CD8-positive, alpha-beta T cell (primary cell): ENCODE measurements at regions of chr4 and their contacts with region 1.

Region 1: GRCh38 chr4:101347557-101348366 is 436 bp upstream of the PPP3CA start:
- DNase-seq: peak; percentile 98 to 100 (median 99)
- ATAC-seq: peak; percentile 85
- H3K4me3 ChIP-seq: peak overlapping the region; percentile 96 to 99
- H3K4me3 Mint-ChIP-seq: peak overlapping the region; percentile 98
- H3K27ac ChIP-seq: peak overlapping the region; percentile 71 to 82
- H3K27ac Mint-ChIP-seq: peak overlapping the region; percentile 94
- H3K4me1 ChIP-seq: peaks cover 10% of the 10 kb centered on the region
- H3K4me1 Mint-ChIP-seq: peaks cover 33% of the 10 kb centered on the region
- H3K27me3 ChIP-seq: peaks cover 0 to 3% of the 10 kb centered on the region in 2 experiments
- H3K27me3 Mint-ChIP-seq: peaks cover 15% of the 10 kb centered on the region
- CTCF ChIP-seq: no peak

Region 2: DNA sequence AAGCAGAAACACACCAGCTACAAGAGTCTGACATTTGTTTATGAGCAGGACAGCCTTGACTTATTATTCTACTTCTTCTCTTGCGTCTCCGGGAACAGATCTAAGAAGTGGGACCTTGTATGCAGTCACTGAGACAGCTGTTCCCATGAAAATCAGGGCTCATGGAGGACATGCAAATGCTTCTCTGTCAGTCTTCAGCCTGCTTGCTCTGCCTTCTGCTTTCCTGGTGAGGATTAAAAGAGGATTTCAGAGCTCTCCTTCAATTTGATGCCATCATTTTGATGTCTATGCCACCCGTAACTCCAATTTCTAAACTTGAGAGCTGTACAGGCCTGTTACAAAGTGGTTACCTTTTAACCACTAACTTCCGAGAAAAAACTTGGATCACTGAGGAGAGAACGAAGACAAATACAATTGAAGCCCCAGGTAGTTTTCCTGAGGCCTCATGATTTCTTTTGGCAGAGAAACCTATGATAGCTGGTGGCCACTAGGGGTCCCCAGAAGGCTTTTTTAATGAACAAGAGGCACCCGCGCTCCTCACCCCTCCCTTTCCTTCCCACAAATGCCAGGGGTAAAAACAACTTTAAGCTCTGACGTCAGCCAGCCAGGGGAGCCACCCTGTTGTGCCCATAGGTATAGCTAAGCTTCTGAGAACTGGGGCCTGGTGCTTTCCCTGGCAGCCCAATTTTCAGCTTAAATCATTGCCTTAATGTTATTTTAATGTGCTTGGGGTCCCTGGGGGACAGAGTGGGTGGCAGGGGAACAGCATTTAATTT is 1254.5 kb before region 1 on chr4:
- CTCF ChIA-PET with region 1: no interaction called
- POLR2A ChIA-PET with region 1: no interaction called
- intact Hi-C with region 1: loop called (anchors 5 kb)
- DNase-seq: peak; percentile 68 to 97 (median 86)
- ATAC-seq: peak; percentile 99
- H3K4me3 ChIP-seq: no peak overlapping the region
- H3K4me3 Mint-ChIP-seq: no peak overlapping the region
- H3K27ac ChIP-seq: peak overlapping the region in 1 of 2 experiments; percentile 59
- H3K27ac Mint-ChIP-seq: peak overlapping the region; percentile 91
- H3K4me1 ChIP-seq: peaks cover 7% of the 10 kb centered on the region
- H3K4me1 Mint-ChIP-seq: peaks cover 18% of the 10 kb centered on the region
- H3K27me3 ChIP-seq: no peaks in the 10 kb centered on the region
- H3K27me3 Mint-ChIP-seq: no peaks in the 10 kb centered on the region
- CTCF ChIP-seq: peak; percentile 71

Region 3: DNA sequence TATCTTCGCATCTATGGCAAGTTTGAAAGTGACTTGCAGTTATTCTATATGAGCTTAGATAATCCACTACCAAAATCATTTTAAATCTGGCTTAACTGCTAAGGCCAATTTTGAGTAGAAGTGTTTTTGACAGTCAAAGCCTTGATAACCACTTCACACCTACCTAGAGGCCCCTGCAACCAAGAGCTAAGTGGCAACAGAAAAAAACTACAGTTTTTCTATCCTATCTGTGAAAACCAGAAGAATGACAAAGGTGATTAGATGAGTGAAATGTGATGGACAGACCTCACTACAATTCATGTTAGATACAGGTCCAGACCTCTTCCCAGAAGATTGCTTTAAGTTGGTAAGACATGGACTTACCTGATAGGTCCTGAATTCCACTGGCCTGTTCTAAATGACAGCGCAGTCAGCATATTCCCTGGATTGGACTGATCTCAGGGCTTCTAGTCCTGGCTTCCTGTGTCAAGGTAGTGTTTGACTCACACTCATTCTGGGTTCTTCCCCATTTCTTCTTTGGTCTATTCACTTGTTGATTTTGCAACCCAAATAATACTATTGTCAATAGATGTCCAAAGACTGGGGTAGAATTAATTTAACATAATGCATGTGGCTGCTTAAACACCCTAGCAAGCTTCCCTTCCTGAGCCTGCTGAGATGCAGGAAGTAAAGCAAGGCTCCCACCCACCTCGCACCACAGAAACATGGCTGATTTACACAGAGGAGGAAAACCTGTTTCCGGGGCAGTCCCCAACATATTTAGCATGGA is 65.5 kb before region 1 on chr4:
- CTCF ChIA-PET with region 1: no interaction called
- POLR2A ChIA-PET with region 1: no interaction called
- intact Hi-C with region 1: loop called (anchors 5 kb)
- DNase-seq: peak in 4 of 9 experiments; percentile 9 to 61 (median 33)
- ATAC-seq: peak; percentile 42
- H3K4me3 ChIP-seq: no peak overlapping the region
- H3K4me3 Mint-ChIP-seq: no peak overlapping the region
- H3K27ac ChIP-seq: peak overlapping the region in 1 of 2 experiments; percentile 7
- H3K27ac Mint-ChIP-seq: no peak overlapping the region
- H3K4me1 ChIP-seq: peaks cover 16% of the 10 kb centered on the region
- H3K4me1 Mint-ChIP-seq: peaks cover 57% of the 10 kb centered on the region
- H3K27me3 ChIP-seq: no peaks in the 10 kb centered on the region
- H3K27me3 Mint-ChIP-seq: no peaks in the 10 kb centered on the region
- CTCF ChIP-seq: no peak

Region 4: DNA sequence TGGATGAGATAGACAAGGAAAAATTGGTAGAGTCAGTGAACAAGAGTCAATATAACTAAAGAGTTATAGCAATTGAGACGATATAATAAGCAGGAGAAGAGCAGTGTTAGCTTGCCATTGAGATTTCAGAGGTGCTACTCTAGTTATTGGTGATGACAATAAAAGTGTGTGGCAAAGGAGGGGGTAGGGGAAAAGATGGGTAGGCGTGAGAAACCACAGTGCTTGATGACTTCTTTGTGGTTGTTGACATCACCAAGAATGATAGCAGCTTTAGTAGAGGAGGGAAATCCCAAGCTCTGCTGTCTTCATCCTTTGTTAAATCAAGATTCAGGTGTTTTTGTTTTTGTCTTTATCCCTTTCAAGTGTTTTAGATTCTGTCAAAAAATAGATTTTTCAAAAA is 179.4 kb after region 1 on chr4:
- CTCF ChIA-PET with region 1: interaction called, 3 read pairs
- POLR2A ChIA-PET with region 1: no interaction called
- intact Hi-C with region 1: loop called (anchors 5 to 10 kb)
- DNase-seq: peak in 8 of 9 experiments; percentile 19 to 93 (median 54)
- ATAC-seq: peak; percentile 93
- H3K4me3 ChIP-seq: no peak overlapping the region
- H3K4me3 Mint-ChIP-seq: no peak overlapping the region
- H3K27ac ChIP-seq: no peak overlapping the region
- H3K27ac Mint-ChIP-seq: peak overlapping the region; percentile 28
- H3K4me1 ChIP-seq: peaks cover 16% of the 10 kb centered on the region
- H3K4me1 Mint-ChIP-seq: peaks cover 16% of the 10 kb centered on the region
- H3K27me3 ChIP-seq: peaks cover 0 to 7% of the 10 kb centered on the region in 2 experiments
- H3K27me3 Mint-ChIP-seq: peaks cover 29% of the 10 kb centered on the region
- CTCF ChIP-seq: no peak

Region 5: DNA sequence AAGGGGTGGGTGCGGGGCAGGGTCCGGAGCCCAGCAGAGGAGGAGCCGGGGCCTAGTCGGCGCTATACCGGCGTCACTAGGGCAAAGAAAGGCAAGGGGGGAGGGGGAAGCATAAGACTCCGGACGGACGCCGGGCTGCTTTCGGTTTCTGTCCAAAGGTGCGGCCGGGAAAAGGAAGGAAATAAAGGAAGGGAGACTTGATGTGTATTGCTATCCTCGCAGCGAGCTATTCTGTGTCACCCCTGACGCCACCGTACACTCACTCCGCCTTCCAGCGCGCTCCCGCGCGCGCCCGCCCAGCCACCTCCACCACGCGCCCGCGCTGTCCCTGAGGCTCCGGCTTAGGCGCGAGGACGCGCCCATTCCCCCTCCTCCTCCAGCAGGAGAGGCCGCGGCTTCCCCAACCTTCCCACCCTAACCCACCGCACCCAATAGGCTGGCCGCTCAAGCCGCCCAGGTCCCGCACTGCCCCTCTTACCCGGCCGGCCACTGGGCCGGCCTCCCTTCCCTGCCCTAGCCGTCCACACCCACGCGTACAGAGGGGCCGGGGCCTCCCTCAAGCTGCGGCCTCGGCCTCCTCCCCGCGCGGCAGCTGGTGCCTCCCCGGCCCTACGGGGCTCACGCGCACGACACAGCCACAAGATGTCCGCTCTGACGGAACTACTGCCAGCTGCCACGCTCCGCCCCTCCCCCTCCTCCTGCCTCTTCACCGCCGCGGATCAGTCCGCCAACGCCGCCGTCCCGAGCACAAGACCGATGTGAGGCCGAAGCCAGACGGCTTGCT is 1479.3 kb after region 1 on chr4 and contains the start of gene UBE2D3:
- CTCF ChIA-PET with region 1: no interaction called
- POLR2A ChIA-PET with region 1: no interaction called
- intact Hi-C with region 1: loop called in 1 of 2 experiments (anchors 5 kb)
- DNase-seq: peak; percentile 90 to 98 (median 95)
- ATAC-seq: peak; percentile 49
- H3K4me3 ChIP-seq: peak within 1 kb of the TSS; percentile 80 to 90
- H3K4me3 Mint-ChIP-seq: no peak within 1 kb of the TSS
- H3K27ac ChIP-seq: peak within 1 kb of the TSS; percentile 99 to 100
- H3K27ac Mint-ChIP-seq: no peak within 1 kb of the TSS
- H3K4me1 ChIP-seq: peaks cover 37% of the 10 kb centered on the region
- H3K4me1 Mint-ChIP-seq: peaks cover 39% of the 10 kb centered on the region
- H3K27me3 ChIP-seq: no peaks in the 10 kb centered on the region
- H3K27me3 Mint-ChIP-seq: no peaks in the 10 kb centered on the region
- CTCF ChIP-seq: no peak
- total RNA-seq, gene UBE2D3: 752 to 758 TPM

Region 6: DNA sequence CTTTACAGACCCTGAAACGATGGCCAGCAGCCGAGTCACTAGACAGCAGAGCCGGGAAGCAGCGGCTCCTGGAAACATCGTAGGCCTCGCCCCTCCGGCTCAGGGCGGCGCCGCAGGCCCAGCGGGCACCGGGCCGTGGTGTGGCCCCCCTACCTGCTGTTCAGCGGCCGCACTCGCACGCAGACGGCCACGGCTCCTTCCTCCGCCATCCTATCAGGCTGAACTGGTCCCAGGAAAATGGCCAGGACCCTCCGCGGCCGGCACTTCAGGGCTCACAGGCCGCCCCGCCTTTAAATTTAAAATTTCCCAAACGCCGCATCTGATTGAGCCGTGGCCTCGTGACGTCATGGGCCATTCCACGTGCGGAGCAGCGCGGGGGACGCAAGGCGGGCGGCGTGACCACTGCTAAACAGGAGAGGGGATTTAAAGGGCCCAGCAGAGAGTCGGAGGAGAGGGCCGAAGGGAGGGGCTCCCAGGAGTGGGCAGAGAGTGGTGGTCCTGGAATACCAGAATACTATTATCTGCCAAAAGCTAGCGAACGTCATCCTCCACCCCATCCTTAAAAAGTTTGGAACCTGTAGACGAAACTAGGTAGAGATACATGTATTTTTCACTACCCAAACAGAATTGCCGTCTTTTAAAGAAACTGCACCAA is 1850.5 kb after region 1 on chr4 and contains the start of gene CENPE:
- CTCF ChIA-PET with region 1: no interaction called
- POLR2A ChIA-PET with region 1: no interaction called
- intact Hi-C with region 1: loop called (anchors 2 to 10 kb)
- DNase-seq: peak; percentile 76 to 92 (median 84)
- ATAC-seq: peak; percentile 84
- H3K4me3 ChIP-seq: peak within 1 kb of the TSS; percentile 72 to 81
- H3K4me3 Mint-ChIP-seq: peak within 1 kb of the TSS; percentile 98
- H3K27ac ChIP-seq: peak within 1 kb of the TSS; percentile 85 to 87
- H3K27ac Mint-ChIP-seq: peak within 1 kb of the TSS; percentile 99
- H3K4me1 ChIP-seq: peaks cover 11% of the 10 kb centered on the region
- H3K4me1 Mint-ChIP-seq: peaks cover 12% of the 10 kb centered on the region
- H3K27me3 ChIP-seq: no peaks in the 10 kb centered on the region
- H3K27me3 Mint-ChIP-seq: no peaks in the 10 kb centered on the region
- CTCF ChIP-seq: no peak
- total RNA-seq, gene CENPE: 0.97 to 3.1 TPM